K562 (cell line): ENCODE measurements at regions of chr16 and their contacts with region 1.

Region 1: GRCh38 chr16:31440516-31441184 is 1.9 kb downstream of the ZNF843 start:
- DNase-seq: no peak
- ATAC-seq: no peak
- H3K4me3 ChIP-seq: no peak overlapping the region
- H3K27ac ChIP-seq: no peak overlapping the region
- H3K4me1 ChIP-seq: peaks cover 3 to 25% of the 10 kb centered on the region in 2 experiments; a peak in 2 of 5 replicates
- H3K27me3 ChIP-seq: no peaks in the 10 kb centered on the region; a peak in 1 of 5 replicates
- CTCF ChIP-seq: no peak
- EP300 ChIP-seq: no peak
- POLR2A ChIP-seq: no peak
- RAD21 ChIP-seq: no peak

Region 2: DNA sequence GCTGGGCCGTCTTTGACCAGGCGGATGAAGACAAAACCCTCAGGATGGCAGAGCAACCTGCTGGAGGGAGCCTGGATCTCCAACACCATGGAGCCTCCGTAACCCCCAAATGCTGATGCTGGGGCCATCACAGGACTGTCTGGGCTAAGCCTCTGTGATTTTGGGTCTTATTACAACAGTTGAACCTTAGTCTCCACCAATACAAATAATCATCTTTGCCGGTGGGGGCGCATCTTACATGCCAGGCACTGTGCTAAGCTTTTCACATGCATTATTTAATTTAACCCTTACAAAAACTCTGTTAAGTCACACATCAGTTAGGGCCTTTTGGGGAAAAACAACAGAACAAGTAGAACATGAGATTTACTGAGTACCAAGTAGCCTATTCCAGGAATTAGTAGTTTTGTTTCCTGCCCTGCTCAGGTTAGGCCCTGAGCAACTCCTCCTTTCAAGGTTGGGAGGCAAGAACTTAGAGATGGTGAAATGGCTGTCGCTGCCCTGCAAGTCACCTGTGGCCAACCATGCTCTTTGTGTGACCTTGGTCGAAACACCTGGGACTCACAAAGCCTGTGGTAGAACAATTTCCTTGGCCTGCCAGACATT is 189.8 kb before region 1 on chr16:
- CTCF ChIA-PET with region 1: no interaction called
- POLR2A ChIA-PET with region 1: no interaction called
- in situ Hi-C with region 1: no loop called
- intact Hi-C with region 1: no loop called
- DNase-seq: peak in 1 of 4 experiments; percentile 2
- ATAC-seq: no peak
- H3K4me3 ChIP-seq: no peak overlapping the region
- H3K27ac ChIP-seq: no peak overlapping the region
- H3K4me1 ChIP-seq: peaks cover 23 to 32% of the 10 kb centered on the region in 2 experiments
- H3K27me3 ChIP-seq: no peaks in the 10 kb centered on the region
- CTCF ChIP-seq: 0 out of 6 replicates have a peak, but pooled peaks of 1 of the 3 experiments have one; percentile 3
- EP300 ChIP-seq: no peak
- POLR2A ChIP-seq: no peak
- RAD21 ChIP-seq: no peak

Region 3: DNA sequence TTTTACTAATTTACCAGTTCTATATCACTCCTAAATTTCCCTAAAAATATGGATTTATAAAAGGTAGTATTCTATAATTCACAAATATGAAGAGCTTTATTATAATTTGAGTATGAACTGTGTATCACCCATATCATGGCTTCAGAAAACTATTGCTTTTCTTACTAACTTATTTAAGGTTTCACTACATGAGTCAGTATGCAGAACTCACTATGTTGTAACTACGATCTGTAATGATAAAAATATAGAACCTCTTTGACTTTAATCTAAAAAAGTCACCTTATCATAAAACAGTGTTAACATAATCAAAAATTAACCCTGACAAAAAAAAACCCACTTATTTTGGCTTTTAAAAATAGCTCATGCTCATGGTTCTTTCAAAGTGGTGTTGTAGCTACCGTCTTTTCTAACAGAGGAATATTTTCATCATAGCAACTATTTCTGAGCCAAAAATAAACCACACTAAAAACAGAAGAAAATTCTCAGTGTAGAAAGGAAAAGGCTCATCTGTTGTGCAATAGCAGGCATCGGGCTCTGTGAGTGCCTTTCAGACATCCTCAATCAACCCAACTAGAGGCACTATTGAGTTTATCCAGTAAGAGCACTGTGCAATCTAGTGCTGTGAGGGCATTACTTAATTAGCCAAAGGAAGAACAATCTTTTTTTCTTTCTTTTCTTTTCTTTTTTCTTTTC is 138.8 kb before region 1 on chr16:
- CTCF ChIA-PET with region 1: no interaction called
- POLR2A ChIA-PET with region 1: no interaction called
- in situ Hi-C with region 1: no loop called
- intact Hi-C with region 1: loop called (anchors 5 kb)
- DNase-seq: peak in 3 of 4 experiments; percentile 13 to 24 (median 14)
- ATAC-seq: peak; percentile 84
- H3K4me3 ChIP-seq: no peak overlapping the region
- H3K27ac ChIP-seq: no peak overlapping the region
- H3K4me1 ChIP-seq: peaks cover 0 to 5% of the 10 kb centered on the region in 2 experiments; a peak in 1 of 5 replicates
- H3K27me3 ChIP-seq: peaks cover 3 to 4% of the 10 kb centered on the region in 2 experiments; a peak in 1 of 5 replicates
- CTCF ChIP-seq: no peak
- EP300 ChIP-seq: no peak
- POLR2A ChIP-seq: no peak
- RAD21 ChIP-seq: peak in 1 of 2 experiments; percentile 10; a peak in 1 of 4 replicates

Region 4: DNA sequence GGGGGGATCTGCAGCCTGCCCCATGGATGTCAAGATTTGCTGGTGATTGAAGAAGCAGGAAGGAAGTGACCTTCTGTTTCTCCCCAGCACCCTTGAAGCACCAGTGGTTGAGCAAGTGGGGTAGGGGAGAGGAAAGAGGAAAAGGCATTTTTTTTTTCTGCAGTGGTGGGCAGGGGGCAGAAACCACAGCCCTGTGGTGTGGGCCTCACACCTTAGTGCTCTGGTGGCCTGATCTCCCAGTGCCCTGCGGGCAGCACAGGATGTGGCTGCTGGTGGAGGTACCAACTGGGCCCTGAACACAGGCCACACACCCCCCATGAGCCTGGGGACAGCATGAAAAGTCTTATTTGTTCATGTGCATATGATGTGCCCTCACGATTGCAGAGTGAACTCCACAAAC is 40.5 kb before region 1 on chr16:
- CTCF ChIA-PET with region 1: no interaction called
- POLR2A ChIA-PET with region 1: no interaction called
- in situ Hi-C with region 1: no loop called
- intact Hi-C with region 1: no loop called
- DNase-seq: no peak
- ATAC-seq: no peak
- H3K4me3 ChIP-seq: no peak overlapping the region
- H3K27ac ChIP-seq: no peak overlapping the region
- H3K4me1 ChIP-seq: peaks cover 3 to 17% of the 10 kb centered on the region in 2 experiments; a peak in 2 of 5 replicates
- H3K27me3 ChIP-seq: no peaks in the 10 kb centered on the region
- CTCF ChIP-seq: no peak
- EP300 ChIP-seq: no peak
- POLR2A ChIP-seq: no peak
- RAD21 ChIP-seq: no peak